PC-9 (cell line): ENCODE measurements at regions of chr1 and their contacts with region 1.

Region 1: GRCh38 chr1:25727111-25727531 is 72.9 kb upstream of the SELENON start:
- DNase-seq: no peak
- H3K4me3 ChIP-seq: no peak overlapping the region
- H3K27ac ChIP-seq: no peak overlapping the region
- H3K4me1 ChIP-seq: no peaks in the 10 kb centered on the region
- H3K27me3 ChIP-seq: no peaks in the 10 kb centered on the region
- CTCF ChIP-seq: no peak

Region 2: DNA sequence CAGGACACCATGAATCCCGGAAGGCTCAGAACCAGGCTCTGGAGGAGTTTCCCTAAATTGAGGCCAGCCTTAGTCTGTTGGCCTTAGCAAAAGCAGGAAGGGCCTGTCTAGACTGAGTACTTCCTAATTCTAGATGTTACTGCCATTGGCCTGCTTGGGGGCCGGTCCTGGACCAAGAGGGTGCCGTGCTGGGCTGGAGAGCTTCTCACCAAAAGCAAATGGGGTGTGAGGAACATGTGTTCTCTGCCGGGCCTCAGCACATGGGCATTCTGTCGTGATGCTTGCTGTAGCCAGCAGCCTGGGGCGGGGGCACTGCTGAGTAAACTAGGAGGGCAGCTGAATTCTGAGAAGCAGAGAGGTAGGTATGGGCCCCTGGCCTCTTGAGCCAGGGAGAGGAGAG is 146.2 kb before region 1 on chr1:
- CTCF ChIA-PET with region 1: no interaction called
- POLR2A ChIA-PET with region 1: interaction called, 14 read pairs
- intact Hi-C with region 1: no loop called
- DNase-seq: no peak
- H3K4me3 ChIP-seq: no peak overlapping the region
- H3K27ac ChIP-seq: no peak overlapping the region
- H3K4me1 ChIP-seq: no peaks in the 10 kb centered on the region
- H3K27me3 ChIP-seq: no peaks in the 10 kb centered on the region
- CTCF ChIP-seq: no peak